ENCODE measurements at regions of chr1 and their contacts with region 1.

Region 1: DNA sequence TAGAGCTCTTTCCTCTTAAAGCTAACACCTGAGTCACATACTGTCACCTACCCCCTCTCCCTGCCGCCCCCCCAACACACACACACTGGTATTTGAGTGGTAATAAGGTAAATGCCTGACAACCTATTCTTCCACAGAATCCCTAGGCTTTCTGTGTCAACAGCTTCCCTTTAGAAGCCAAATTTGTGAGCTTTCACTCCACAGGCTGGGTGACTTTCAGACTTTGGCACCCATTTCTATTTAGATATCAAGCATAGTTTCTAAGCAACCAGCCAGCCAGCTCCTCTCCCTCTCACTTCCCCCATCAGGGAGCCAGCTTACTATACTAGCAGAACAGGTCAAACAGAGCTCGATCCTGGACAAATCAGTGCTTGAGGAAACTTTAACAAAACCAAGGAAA is 3.2 kb upstream of the C1orf74 start:
- DNase-seq: no peak
- ATAC-seq: no peak
- H3K4me3 ChIP-seq: no peak overlapping the region
- H3K4me3 Mint-ChIP-seq: no peak overlapping the region
- H3K27ac ChIP-seq: no peak overlapping the region
- H3K27ac Mint-ChIP-seq: no peak overlapping the region
- H3K4me1 ChIP-seq: peaks cover 7 to 24% of the 10 kb centered on the region in 2 experiments
- H3K4me1 Mint-ChIP-seq: peaks cover 25 to 29% (median 27%) of the 10 kb centered on the region in 3 donors
- H3K27me3 ChIP-seq: peaks cover 0 to 4% of the 10 kb centered on the region in 2 experiments
- H3K27me3 Mint-ChIP-seq: peaks cover 0 to 9% of the 10 kb centered on the region in 2 donors

Region 2: DNA sequence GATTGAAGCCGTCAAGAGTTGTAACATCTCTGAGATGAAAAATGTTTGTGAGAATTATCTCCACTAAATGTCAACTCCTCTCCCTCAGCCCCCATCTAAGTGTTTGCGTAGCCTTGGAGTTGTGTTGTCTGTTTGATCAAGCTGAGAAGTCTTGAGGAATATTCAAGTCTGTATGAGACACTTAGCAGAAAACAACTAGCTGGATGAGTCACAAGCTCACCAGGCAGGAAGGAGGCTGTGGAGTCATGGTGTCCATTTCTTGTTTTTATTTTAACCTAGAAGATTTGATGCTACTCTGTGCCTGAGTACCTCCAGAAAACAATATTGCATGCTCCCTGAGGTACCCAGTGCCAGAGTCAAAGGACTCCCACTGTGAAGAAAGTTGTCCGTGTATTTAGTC is 1331.7 kb before region 1 on chr1:
- CTCF ChIA-PET with region 1: no interaction called
- POLR2A ChIA-PET with region 1: no interaction called
- DNase-seq: no peak
- ATAC-seq: no peak
- H3K4me3 ChIP-seq: no peak overlapping the region
- H3K4me3 Mint-ChIP-seq: no peak overlapping the region
- H3K27ac ChIP-seq: no peak overlapping the region
- H3K27ac Mint-ChIP-seq: no peak overlapping the region
- H3K4me1 ChIP-seq: no peaks in the 10 kb centered on the region
- H3K4me1 Mint-ChIP-seq: no peaks in the 10 kb centered on the region
- H3K27me3 ChIP-seq: no peaks in the 10 kb centered on the region
- H3K27me3 Mint-ChIP-seq: peaks cover 0 to 11% of the 10 kb centered on the region in 2 donors

Region 3: DNA sequence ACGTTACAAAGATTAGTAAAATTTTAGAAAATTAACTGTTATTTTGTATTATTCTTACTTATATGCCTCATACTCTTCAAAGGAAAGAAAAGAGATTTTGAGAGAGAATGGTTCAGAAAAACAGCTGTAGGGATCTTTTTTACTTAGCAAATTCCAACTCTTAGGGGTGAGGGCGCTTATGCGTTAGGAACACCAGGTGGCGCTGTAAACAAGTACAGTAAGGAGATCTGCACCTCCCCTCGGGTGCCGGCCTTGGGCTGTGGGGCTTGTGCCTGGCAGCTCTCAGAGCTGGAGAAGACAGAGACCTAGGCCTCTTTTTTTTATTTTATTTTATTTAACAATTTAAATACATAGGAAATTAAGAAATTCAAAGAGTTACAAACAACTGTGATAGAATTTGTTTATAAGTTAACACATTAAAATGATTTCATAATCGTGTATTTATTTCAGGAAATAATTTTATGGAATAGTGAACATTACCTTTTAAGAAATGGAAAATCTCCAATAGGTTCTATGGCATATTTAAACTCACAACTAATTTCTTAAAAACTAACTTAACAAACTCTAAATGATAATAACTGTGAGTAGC is 72.8 kb after region 1 on chr1:
- CTCF ChIA-PET with region 1: interaction called in 1 of 2 experiments, 13 read pairs
- POLR2A ChIA-PET with region 1: no interaction called
- DNase-seq: peak; percentile 32 to 86 (median 60)
- ATAC-seq: peak; percentile 77 to 84 (median 80)
- H3K4me3 ChIP-seq: no peak overlapping the region
- H3K4me3 Mint-ChIP-seq: no peak overlapping the region
- H3K27ac ChIP-seq: no peak overlapping the region
- H3K27ac Mint-ChIP-seq: no peak overlapping the region
- H3K4me1 ChIP-seq: peaks cover 0 to 1% of the 10 kb centered on the region in 2 experiments
- H3K4me1 Mint-ChIP-seq: no peaks in the 10 kb centered on the region
- H3K27me3 ChIP-seq: peaks cover 0 to 11% of the 10 kb centered on the region in 2 experiments
- H3K27me3 Mint-ChIP-seq: peaks cover 8 to 19% of the 10 kb centered on the region in 2 donors